Right ventricle myocardium superior (tissue), 1 donor: ENCODE measurements at regions of chr16 and their contacts with region 1.

Region 1: GRCh38 chr16:88743693-88744576 is 37.6 kb downstream of the CTU2 start:
- DNase-seq: peak; percentile 89
- ATAC-seq: peak; percentile 84

Region 2: DNA sequence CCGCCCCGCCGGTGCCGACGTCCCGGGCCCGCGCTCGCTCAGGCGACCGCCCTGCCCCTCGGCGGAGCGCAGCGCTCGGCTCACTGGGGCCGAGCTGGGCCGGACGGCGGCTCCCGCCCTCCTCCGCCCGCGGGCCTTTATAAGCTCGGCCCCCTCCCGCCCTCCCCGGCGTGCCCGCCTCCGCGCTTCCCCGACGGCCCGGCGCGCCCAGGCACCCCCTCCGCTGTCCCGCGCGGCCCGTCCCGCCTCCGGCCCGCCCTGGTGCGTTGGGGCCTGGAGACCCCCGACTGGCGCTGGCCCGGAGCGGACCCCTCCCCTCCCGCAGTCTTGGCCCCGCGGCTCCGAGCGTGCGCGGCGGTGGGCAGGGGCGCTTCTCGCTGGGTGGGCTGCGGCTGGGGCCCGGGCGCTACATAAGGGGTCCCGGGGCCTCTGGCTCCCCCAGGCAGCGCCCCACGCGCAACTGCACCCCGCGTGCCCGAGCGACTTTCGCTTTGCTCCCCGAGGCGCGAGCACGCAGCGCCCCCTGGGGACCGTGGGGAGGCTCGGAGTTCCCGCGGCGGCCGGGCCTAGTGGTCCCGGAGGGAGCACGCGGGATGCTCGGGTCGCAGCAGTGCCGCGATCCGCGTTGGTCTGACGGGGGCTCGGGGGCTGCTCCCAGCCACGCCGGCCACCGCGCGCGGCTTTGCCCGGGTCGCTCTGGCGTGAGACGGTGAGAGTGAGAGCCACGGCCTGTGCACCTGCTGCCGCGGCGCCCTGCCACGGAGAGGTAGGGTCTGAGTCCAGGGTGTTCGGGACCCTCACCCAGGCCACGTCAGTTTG is 41.4 kb after region 1 on chr16 and contains the start of gene PIEZO1:
- intact Hi-C with region 1: loop called (anchors 2 kb)
- DNase-seq: peak; percentile 87
- ATAC-seq: peak; percentile 66
- total RNA-seq, gene PIEZO1: 15.9 TPM

Region 3: DNA sequence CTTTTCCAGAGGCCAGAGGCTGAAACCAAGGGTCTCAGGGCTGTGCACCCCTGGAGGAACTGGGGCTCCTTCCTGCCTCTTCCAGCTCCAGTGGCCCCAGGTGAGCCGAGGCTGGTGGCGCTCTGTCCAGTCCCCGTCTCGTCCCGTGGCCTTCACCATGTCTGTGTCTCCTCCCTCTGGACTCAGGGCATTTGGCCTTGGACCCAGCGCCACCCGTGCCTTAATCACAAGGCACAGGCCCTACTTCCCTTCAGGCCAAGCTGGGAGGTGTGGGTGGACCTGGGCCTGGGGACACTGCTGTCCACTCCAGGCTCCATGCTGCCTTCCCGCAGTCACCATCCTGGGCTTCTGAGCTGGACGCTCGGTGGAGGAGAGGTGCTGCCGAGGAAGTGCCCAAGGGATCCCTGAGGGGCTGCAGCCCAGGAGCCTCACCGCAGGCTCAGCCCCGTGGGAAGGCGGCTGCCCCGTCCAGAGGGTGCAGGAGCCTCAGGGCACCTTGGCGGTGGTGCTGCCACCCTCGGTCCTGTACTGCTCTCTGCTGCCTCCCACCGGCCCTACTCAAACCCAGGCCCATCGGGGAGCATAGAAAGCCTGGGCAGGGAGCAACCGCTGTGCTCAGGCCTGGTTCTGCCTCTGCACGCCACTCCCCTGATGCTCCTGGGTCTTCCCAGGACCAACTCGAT is 77.4 kb after region 1 on chr16:
- intact Hi-C with region 1: no loop called
- DNase-seq: no peak
- ATAC-seq: no peak

Region 4: DNA sequence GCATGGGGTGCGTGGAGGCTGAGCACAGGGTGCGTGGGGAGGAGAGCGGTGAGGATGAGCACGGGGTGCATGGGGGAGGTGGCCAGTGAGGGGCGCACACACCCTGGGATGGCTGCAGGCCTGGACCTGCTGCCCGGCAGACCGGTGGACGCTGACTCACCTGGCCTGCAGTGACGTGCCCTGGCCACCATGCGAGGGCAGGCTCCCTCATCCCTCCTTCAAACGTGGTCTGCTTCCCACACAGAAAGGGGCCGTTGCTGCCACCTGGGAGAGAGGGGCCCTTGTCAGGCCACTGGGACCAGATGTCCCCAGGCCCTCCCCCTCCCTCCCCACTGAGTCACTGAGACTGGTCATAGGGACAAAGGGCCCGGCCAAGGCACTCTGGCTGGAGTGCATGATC is 87.9 kb after region 1 on chr16:
- intact Hi-C with region 1: no loop called
- DNase-seq: no peak
- ATAC-seq: no peak

Region 5: GRCh38 chr16:89167425-89167941 is 423.5 kb after region 1 on chr16:
- intact Hi-C with region 1: loop called (anchors 5 kb)
- DNase-seq: peak; percentile 90
- ATAC-seq: peak; percentile 80

Region 6: GRCh38 chr16:89217388-89218191 is 473.7 kb after region 1 on chr16 and contains the start of gene ZNF778:
- intact Hi-C with region 1: loop called (anchors 5 kb)
- DNase-seq: peak; percentile 92
- ATAC-seq: peak; percentile 98
- total RNA-seq, gene ZNF778: 9.9 TPM